Posterior cingulate gyrus (tissue), 11 donors: ENCODE measurements at regions of chr21 and their contacts with region 1.

Region 1: GRCh38 chr21:26842976-26843932 is 2.0 kb downstream of the ADAMTS1 start:
- DNase-seq: peak; percentile 75 to 98 (median 87)

Region 2: GRCh38 chr21:26546446-26547097 is 296.7 kb before region 1 on chr21:
- intact Hi-C with region 1: no loop called
- DNase-seq: peak in 2 of 10 donors; percentile 7 to 49

Region 3: DNA sequence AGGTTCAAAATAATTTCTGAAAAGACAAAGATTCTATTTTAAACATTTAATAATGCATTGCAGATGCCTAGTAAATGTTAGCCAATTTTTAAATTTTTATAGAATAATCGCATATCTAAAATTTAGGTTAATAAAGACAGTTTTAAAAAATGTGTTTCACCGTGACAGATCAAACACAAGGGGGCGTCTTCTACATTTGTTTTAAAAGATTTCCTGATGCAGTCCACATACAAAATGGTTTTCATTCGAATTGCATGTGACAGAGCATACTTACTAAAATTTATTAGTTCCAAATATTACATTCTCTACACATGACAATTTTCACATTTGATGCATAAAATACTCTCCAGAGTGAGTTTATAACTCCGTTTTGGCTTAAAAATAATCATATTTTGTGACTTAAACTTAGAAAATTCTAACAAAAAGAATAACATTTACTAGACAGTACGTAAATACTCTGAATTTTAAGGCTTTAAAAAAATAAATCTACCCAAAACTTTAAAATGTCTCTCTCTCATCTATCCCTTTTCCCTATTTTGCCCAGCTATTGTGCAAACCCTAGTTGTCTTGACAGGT is 73.6 kb before region 1 on chr21:
- intact Hi-C with region 1: loop called (anchors 2 kb)
- DNase-seq: no peak

Region 4: GRCh38 chr21:26795866-26796329 is 47.4 kb before region 1 on chr21:
- intact Hi-C with region 1: loop called (anchors 5 kb)
- DNase-seq: peak; percentile 27 to 91 (median 54)